ENCODE measurements at regions of chr19 and their contacts with region 1.

Region 1: GRCh38 chr19:53867225-53868090 is at the start of gene MYADM:
- H3K4me3 ChIP-seq: peak within 1 kb of the TSS; percentile 71
- H3K27ac ChIP-seq: peak within 1 kb of the TSS; percentile 28; the same call in 1 of the 2 replicates
- H3K4me1 ChIP-seq: peaks cover 15% of the 10 kb centered on the region
- CTCF ChIP-seq: no peak

Region 2: DNA sequence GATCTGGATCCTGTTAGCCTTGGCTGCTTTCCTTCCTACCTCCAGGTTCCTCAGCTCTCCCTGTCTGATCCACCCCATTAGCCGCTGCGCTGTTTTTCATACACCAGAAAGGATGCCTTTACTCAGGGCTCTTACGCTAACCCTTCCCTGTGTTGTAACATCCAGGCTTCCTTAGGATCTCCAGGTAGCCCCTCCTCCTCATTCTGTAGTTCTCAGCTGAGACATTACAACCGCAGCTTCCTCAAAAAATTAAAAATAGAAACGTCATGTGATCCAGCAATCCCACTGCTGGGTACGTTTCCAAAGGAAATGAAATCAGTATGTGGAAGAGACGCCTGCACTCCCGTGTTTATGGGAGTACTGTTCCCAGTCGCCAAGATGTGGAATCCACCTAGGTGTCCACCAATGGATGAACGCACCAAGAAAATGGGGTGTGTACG is 18.2 kb before region 1 on chr19:
- CTCF ChIA-PET with region 1: interaction called, 10 read pairs
- POLR2A ChIA-PET with region 1: interaction called, 7 read pairs
- H3K4me3 ChIP-seq: no peak overlapping the region
- H3K27ac ChIP-seq: no peak overlapping the region
- H3K4me1 ChIP-seq: no peaks in the 10 kb centered on the region
- CTCF ChIP-seq: no peak

Region 3: GRCh38 chr19:53879140-53880081 is 12.0 kb after region 1 on chr19:
- CTCF ChIA-PET with region 1: interaction called, 4 read pairs
- POLR2A ChIA-PET with region 1: interaction called, 39 read pairs
- H3K4me3 ChIP-seq: peak overlapping the region; percentile 58
- H3K27ac ChIP-seq: peak overlapping the region; percentile 27; the same call in 1 of the 2 replicates
- H3K4me1 ChIP-seq: peaks cover 8% of the 10 kb centered on the region; the same call in 1 of the 2 replicates
- CTCF ChIP-seq: 0 out of 2 replicates have a peak, but pooled peaks have one; percentile 14

Region 4: DNA sequence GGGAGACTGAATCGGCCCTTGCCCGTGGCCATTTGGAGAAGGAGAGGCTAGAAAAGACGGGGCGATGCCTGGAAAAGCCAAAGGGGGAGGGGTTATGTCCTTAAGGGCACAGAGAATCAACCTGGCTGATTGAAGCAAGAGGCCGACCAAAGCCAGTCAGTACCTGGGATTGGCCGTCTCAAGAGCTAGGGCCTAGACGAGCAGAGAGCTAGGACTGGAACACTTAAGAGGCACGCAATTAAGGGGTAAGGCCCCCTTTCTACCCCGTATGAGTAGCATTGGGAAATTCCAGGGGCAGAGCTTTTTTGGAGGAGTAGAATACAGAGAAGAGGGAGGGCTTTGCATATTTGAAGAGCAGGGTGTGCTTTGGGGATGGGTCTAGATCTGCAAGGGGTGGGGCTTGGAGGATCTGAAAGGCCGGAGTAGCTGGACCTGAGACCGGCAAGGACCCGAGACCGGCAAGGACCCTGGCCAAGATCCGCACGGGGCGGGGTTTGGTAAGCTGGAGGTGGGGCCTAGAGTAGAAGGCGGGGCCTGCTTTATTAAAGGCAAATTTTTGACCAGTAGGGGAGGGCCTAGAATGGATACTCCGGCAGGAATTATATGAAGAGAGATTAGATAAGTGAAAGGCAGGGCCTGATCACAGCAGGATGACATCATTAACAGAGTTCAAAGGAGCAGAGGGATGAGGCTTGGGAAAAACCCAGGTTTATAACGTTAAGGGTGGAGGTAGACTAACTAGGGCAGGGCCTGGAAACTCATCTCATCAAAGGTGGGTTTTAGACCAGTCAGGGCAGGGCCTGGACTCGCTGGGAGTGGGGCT is 113.3 kb after region 1 on chr19:
- CTCF ChIA-PET with region 1: no interaction called
- POLR2A ChIA-PET with region 1: interaction called, 20 read pairs
- H3K4me3 ChIP-seq: peak overlapping the region; percentile 3
- H3K27ac ChIP-seq: peak overlapping the region; percentile 44; the same call in 1 of the 2 replicates
- H3K4me1 ChIP-seq: peaks cover 18% of the 10 kb centered on the region
- CTCF ChIP-seq: no peak; the same call in 1 of the 2 replicates